ENCODE measurements at regions of chr5 and their contacts with region 1.

Region 1: GRCh38 chr5:135154197-135154596 is 120.2 kb upstream of the PITX1 start:
- DNase-seq: no peak
- ATAC-seq: no peak
- H3K4me3 ChIP-seq: no peak overlapping the region
- H3K27ac ChIP-seq: no peak overlapping the region; the same call in 2 of the 3 replicates
- H3K4me1 ChIP-seq: peaks cover 25 to 33% of the 10 kb centered on the region in 2 experiments; a peak in 4 of 5 replicates
- H3K27me3 ChIP-seq: no peaks in the 10 kb centered on the region
- CTCF ChIP-seq: no peak
- EP300 ChIP-seq: no peak
- POLR2A ChIP-seq: no peak
- RAD21 ChIP-seq: no peak

Region 2: GRCh38 chr5:135167634-135168033 is 13.4 kb after region 1 on chr5:
- CTCF ChIA-PET with region 1: no interaction called
- POLR2A ChIA-PET with region 1: interaction called, 18 read pairs
- in situ Hi-C with region 1: no loop called
- intact Hi-C with region 1: no loop called
- DNase-seq: no peak
- ATAC-seq: no peak
- H3K4me3 ChIP-seq: no peak overlapping the region
- H3K27ac ChIP-seq: no peak overlapping the region
- H3K4me1 ChIP-seq: peaks cover 4 to 8% of the 10 kb centered on the region in 2 experiments; a peak in 3 of 5 replicates
- H3K27me3 ChIP-seq: no peaks in the 10 kb centered on the region
- CTCF ChIP-seq: no peak
- EP300 ChIP-seq: no peak
- POLR2A ChIP-seq: no peak
- RAD21 ChIP-seq: no peak

Region 3: GRCh38 chr5:135466178-135467050 is 312.2 kb after region 1 on chr5:
- CTCF ChIA-PET with region 1: no interaction called
- POLR2A ChIA-PET with region 1: no interaction called
- in situ Hi-C with region 1: no loop called
- intact Hi-C with region 1: no loop called
- DNase-seq: peak; percentile 81 to 89 (median 84)
- ATAC-seq: peak; percentile 94
- H3K4me3 ChIP-seq: no peak overlapping the region
- H3K27ac ChIP-seq: no peak overlapping the region
- H3K4me1 ChIP-seq: peaks cover 4 to 15% of the 10 kb centered on the region in 2 experiments; a peak in 4 of 5 replicates
- H3K27me3 ChIP-seq: peaks cover 0 to 12% of the 10 kb centered on the region in 2 experiments; a peak in 2 of 5 replicates
- CTCF ChIP-seq: peak; percentile 90 to 95 (median 95)
- EP300 ChIP-seq: no peak
- POLR2A ChIP-seq: no peak
- RAD21 ChIP-seq: peak; percentile 99

Measured in K562 (cell line).